Tibial artery (tissue), 4 donors: ENCODE measurements at regions of chr2 and their contacts with region 1.

Region 1: DNA sequence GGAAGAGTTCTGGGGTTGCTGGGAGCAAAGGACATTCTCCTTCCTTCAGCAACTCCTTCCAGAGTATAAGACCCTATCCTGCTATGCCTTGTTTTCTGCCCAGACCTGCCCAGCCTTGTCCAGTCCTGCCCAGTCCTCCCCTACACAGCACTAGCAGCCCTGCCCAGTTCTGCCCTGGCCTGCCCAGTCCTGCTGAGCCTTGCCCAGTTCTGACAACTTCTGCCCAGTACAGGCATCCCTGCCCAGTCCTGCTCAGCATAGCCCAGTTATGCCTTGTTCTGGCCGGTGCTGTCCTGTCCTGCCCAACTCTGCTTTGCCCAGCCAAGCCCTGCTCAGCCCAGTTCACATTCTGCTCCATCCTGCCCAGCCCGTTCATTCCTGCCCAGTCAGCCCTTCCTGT is 44.9 kb upstream of the ALK start:
- DNase-seq: no peak
- H3K4me3 ChIP-seq: no peak overlapping the region
- H3K27ac ChIP-seq: no peak overlapping the region
- H3K4me1 ChIP-seq: no peaks in the 10 kb centered on the region
- H3K27me3 ChIP-seq: peaks cover 0 to 10% of the 10 kb centered on the region in 2 donors
- CTCF ChIP-seq: no peak

Region 2: GRCh38 chr2:29950481-29950880 is 15.8 kb before region 1 on chr2:
- intact Hi-C with region 1: loop called (anchors 1 kb)
- DNase-seq: no peak
- H3K4me3 ChIP-seq: no peak overlapping the region
- H3K27ac ChIP-seq: no peak overlapping the region
- H3K4me1 ChIP-seq: no peaks in the 10 kb centered on the region
- H3K27me3 ChIP-seq: peaks cover 0 to 9% of the 10 kb centered on the region in 2 donors
- CTCF ChIP-seq: no peak

Region 3: DNA sequence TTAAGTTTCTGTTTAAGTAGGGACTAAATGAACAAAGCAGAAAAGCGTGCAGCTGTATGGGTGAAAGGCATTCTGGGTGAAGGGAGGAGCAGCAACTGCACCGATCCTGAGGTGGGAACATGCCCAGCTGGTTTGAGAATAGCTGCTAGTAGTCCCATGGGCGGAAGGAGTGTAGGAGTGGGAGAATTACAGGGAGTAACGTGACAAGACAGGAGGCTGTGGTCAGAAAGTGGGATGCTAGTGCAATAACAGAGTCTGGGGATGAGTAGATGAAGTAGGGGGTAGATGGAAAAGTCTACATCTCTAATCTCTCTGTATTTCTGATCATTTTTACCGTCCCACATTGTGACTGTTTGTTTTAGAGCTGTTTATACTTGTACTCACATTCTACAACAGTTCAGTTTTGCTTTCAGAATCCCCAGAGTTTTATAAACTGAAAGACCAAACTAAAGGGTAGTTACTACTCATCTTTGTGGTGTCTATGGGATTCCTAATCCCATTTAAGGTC is 599.6 kb after region 1 on chr2:
- intact Hi-C with region 1: no loop called
- DNase-seq: peak in 1 of 2 donors; percentile 66
- H3K4me3 ChIP-seq: peak overlapping the region; percentile 2 to 3
- H3K27ac ChIP-seq: peak overlapping the region; percentile 78 to 81
- H3K4me1 ChIP-seq: peaks cover 0 to 29% (median 2%) of the 10 kb centered on the region in 4 donors
- H3K27me3 ChIP-seq: no peaks in the 10 kb centered on the region
- CTCF ChIP-seq: no peak